ENCODE measurements at regions of chr18 and their contacts with region 1.

Region 1: GRCh38 chr18:51229328-51229727 is 31.8 kb upstream of the MEX3C start:
- DNase-seq: no peak
- H3K4me3 ChIP-seq: no peak overlapping the region
- H3K27ac ChIP-seq: no peak overlapping the region
- H3K4me1 ChIP-seq: no peaks in the 10 kb centered on the region
- H3K27me3 ChIP-seq: no peaks in the 10 kb centered on the region
- CTCF ChIP-seq: no peak
- POLR2A ChIP-seq: no peak

Region 2: GRCh38 chr18:51321336-51322095 is 92.2 kb after region 1 on chr18:
- intact Hi-C with region 1: loop called (anchors 10 kb)
- DNase-seq: no peak
- H3K4me3 ChIP-seq: no peak overlapping the region
- H3K27ac ChIP-seq: no peak overlapping the region
- H3K4me1 ChIP-seq: no peaks in the 10 kb centered on the region
- H3K27me3 ChIP-seq: no peaks in the 10 kb centered on the region
- CTCF ChIP-seq: no peak
- POLR2A ChIP-seq: no peak

Region 3: DNA sequence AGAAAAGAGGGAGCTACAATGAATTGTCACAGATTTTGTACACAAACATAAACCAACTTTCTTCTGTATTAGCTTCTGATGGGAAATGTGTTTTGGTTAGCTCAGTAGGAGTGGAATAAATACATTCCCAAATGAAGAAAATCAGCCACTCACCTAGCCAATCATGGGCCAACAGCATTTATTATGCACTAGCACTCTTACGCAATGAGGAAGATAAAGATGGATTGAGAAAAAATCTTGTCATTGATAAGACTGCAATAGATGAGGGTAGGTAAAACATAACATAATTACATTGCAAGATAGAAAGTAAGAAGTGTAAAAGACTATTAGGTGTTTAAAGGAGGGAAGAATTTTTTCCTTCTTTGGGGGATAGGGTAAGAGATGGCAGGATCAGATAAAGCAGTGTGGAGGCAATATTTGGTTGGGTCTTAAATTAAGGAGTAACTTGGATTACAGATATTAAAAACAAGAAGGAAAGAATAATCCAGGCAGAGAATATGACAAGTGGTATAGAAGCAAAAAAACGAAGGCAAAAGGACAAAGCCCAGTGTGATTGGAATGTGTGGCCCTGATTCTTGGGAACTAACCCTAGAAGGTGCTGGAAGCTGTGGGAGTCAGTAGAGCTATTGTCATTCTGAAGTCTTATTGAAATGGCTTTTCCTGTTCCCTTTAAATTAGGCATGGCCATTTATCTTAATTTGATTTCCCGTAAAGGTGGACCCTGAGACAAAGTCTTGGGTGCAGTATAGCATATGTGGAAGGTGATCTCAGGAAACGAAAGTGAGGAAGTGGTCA is 176.6 kb after region 1 on chr18:
- intact Hi-C with region 1: no loop called
- DNase-seq: no peak
- H3K4me3 ChIP-seq: no peak overlapping the region
- H3K27ac ChIP-seq: no peak overlapping the region
- H3K4me1 ChIP-seq: no peaks in the 10 kb centered on the region
- H3K27me3 ChIP-seq: no peaks in the 10 kb centered on the region
- CTCF ChIP-seq: no peak
- POLR2A ChIP-seq: no peak

Measured in esophagus squamous epithelium (tissue), 5 donors.